ENCODE measurements at regions of chrX and their contacts with region 1.

Region 1: GRCh38 chrX:129637217-129638109 is 17.3 kb downstream of the APLN start:
- DNase-seq: peak; percentile 77
- ATAC-seq: peak; percentile 78
- H3K4me3 ChIP-seq: no peak overlapping the region
- H3K4me3 Mint-ChIP-seq: no peak overlapping the region
- H3K27ac ChIP-seq: no peak overlapping the region
- H3K27ac Mint-ChIP-seq: no peak overlapping the region
- H3K4me1 ChIP-seq: peaks cover 0 to 5% of the 10 kb centered on the region in 2 donors
- H3K4me1 Mint-ChIP-seq: peaks cover 2% of the 10 kb centered on the region
- H3K27me3 ChIP-seq: no peaks in the 10 kb centered on the region
- H3K27me3 Mint-ChIP-seq: no peaks in the 10 kb centered on the region
- CTCF ChIP-seq: peak; percentile 78

Region 2: DNA sequence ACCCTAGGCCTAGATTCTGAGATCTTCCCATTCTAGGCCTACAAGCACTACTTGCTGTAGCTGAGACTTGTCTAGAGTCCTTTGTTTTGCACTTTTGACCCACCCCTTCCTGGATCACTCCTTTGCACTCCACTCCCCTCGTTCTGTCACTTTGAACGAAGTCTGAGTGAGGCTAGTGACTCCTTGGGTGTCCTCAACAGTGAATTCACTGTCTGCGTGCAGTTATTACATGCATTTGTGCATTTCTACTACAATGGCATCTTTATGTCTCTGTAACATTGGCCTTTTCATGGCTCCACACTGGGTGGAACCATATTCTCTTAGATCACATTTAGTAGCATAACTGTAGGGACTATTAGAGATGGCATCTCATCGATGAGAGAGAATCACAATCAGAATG is 46.9 kb before region 1 on chrX:
- CTCF ChIA-PET with region 1: no interaction called
- POLR2A ChIA-PET with region 1: no interaction called
- intact Hi-C with region 1: no loop called
- DNase-seq: no peak
- ATAC-seq: no peak
- H3K4me3 ChIP-seq: no peak overlapping the region
- H3K4me3 Mint-ChIP-seq: no peak overlapping the region
- H3K27ac ChIP-seq: no peak overlapping the region
- H3K27ac Mint-ChIP-seq: no peak overlapping the region
- H3K4me1 ChIP-seq: no peaks in the 10 kb centered on the region
- H3K4me1 Mint-ChIP-seq: no peaks in the 10 kb centered on the region
- H3K27me3 ChIP-seq: no peaks in the 10 kb centered on the region
- H3K27me3 Mint-ChIP-seq: no peaks in the 10 kb centered on the region
- CTCF ChIP-seq: no peak

Region 3: DNA sequence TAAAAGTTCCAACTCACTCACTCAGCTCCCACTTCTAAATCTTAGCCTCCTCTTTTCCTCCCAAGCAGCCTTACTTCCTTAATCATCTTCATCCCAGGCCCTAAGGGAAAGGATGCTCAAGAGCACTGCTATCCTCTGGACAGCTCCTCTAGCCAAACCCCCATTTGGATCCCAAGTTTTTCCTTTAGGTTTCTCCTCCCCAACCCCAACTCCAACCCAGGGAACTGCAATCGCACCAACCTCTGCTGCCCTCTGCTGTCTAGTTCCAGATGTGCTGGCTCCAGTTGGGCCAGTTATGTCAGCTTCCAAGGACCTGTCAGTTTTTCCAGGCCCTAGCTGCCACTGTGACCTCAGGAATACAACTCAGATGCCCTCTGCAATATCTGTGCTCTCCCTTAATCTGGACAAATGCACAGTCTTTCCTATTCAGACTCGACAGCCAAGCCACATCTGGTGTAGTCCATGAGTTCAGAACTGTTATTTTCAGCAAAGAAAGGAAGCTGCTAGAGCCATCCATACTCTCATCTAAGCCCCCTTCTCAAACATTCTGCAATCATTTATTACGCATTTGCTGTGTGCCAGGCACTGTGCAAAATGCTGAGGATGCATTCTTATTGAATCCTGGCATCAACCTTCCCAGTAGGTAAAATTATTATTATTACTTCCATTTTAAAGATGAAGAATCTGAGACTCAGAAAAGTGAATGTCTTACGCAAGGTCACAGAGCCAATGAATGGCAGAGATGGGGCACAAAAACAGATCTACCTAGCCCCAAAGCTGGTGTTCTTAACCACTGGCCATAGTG is 89.0 kb after region 1 on chrX:
- CTCF ChIA-PET with region 1: interaction called, 14 read pairs
- POLR2A ChIA-PET with region 1: no interaction called
- intact Hi-C with region 1: loop called (anchors 1 kb)
- DNase-seq: peak; percentile 21
- ATAC-seq: no peak
- H3K4me3 ChIP-seq: no peak overlapping the region
- H3K4me3 Mint-ChIP-seq: no peak overlapping the region
- H3K27ac ChIP-seq: no peak overlapping the region
- H3K27ac Mint-ChIP-seq: no peak overlapping the region
- H3K4me1 ChIP-seq: peaks cover 8 to 9% of the 10 kb centered on the region in 2 donors
- H3K4me1 Mint-ChIP-seq: peaks cover 17% of the 10 kb centered on the region
- H3K27me3 ChIP-seq: no peaks in the 10 kb centered on the region
- H3K27me3 Mint-ChIP-seq: no peaks in the 10 kb centered on the region
- CTCF ChIP-seq: peak; percentile 28

Region 4: DNA sequence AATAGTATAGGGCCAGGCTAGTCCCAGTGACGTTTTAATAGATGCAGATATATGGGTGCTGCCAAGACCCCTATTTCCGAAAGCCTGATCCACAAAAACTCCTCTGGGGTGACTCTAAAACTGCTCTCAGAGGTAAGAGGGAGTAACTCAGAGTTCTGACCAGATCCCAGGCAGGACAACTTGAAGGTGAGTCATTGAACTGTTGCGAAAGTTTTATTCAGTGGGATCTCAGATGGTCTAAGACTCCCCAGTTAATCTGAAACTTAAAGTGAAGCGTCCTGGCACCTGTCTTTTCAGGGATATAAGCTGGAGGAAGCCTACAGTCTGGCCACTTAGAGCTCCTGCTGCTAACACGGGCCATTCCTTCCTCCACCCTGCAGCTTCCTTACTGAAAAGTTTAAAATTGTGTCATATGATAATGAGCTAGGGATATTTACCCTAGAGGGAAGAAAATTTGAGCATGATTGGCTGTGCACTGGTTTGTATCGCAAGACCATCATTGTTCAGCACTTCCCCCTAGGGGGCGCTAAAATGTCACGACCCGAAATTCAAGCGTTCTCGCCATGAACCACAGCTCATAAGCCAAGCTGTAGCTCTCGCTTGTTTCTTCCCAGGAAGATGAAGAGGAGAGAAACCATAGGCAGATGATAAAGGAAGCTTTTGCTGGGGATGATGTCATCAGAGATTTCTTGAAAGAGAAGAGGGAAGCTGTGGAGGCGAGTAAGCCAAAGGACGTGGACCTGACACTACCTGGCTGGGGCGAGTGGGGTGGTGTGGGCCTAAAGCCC is 288.0 kb after region 1 on chrX:
- CTCF ChIA-PET with region 1: interaction called, 5 read pairs
- POLR2A ChIA-PET with region 1: no interaction called
- intact Hi-C with region 1: loop called (anchors 5 kb)
- DNase-seq: peak; percentile 79
- ATAC-seq: peak; percentile 66
- H3K4me3 ChIP-seq: no peak overlapping the region
- H3K4me3 Mint-ChIP-seq: no peak overlapping the region
- H3K27ac ChIP-seq: no peak overlapping the region
- H3K27ac Mint-ChIP-seq: no peak overlapping the region
- H3K4me1 ChIP-seq: no peaks in the 10 kb centered on the region
- H3K4me1 Mint-ChIP-seq: peaks cover 6% of the 10 kb centered on the region
- H3K27me3 ChIP-seq: no peaks in the 10 kb centered on the region
- H3K27me3 Mint-ChIP-seq: no peaks in the 10 kb centered on the region
- CTCF ChIP-seq: peak; percentile 69

Measured in B cell (primary cell).